ENCODE measurements at regions of chr14 and their contacts with region 1.

Region 1: DNA sequence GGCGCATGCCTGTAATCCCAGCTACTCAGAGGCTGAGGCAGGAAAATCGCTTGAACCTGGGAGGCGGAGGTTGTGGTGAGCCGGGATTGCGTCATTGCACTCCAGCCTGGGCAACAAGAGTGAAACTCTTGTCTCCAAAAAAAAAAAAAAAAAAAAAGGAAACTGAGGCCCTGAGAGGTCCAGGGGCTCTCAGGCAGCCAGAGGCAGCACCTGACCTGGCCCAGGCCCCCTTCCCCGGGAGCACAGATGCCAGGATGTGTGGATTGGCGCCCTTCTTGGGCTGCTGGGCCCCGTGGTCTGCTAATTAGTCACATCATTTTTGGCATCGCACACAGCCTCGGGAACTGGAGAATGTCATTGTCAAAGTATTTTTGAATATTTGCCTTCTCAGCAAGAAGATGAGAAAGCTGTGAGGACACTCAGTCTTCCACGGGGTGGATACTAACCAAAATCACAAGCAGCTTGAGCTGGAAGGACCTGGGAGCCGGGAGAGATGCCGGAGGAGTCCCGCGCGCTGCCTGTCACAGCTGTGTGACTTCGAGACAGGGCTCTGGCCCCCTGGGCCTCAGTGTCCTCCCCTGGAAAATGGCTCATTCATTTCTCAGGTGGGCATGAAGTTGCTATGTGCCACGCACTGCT is 12.6 kb upstream of the RCOR1 start:
- DNase-seq: no peak
- ATAC-seq: no peak
- H3K4me3 Mint-ChIP-seq: no peak overlapping the region
- H3K27ac Mint-ChIP-seq: no peak overlapping the region
- H3K4me1 Mint-ChIP-seq: no peaks in the 10 kb centered on the region
- H3K27me3 Mint-ChIP-seq: peaks cover 3% of the 10 kb centered on the region
- CTCF ChIP-seq: no peak

Region 2: GRCh38 chr14:102629808-102630350 is 50.1 kb after region 1 on chr14:
- CTCF ChIA-PET with region 1: no interaction called
- POLR2A ChIA-PET with region 1: no interaction called
- intact Hi-C with region 1: loop called (anchors 1 kb)
- DNase-seq: no peak
- ATAC-seq: no peak
- H3K4me3 Mint-ChIP-seq: no peak overlapping the region
- H3K27ac Mint-ChIP-seq: peak overlapping the region; percentile 59
- H3K4me1 Mint-ChIP-seq: peaks cover 53% of the 10 kb centered on the region
- H3K27me3 Mint-ChIP-seq: no peaks in the 10 kb centered on the region
- CTCF ChIP-seq: no peak

Measured in activated B cell treated with CpG ODN at 0.5 μM for 24 hours (primary cell).